ENCODE measurements at regions of chr19 and their contacts with region 1.

Region 1: DNA sequence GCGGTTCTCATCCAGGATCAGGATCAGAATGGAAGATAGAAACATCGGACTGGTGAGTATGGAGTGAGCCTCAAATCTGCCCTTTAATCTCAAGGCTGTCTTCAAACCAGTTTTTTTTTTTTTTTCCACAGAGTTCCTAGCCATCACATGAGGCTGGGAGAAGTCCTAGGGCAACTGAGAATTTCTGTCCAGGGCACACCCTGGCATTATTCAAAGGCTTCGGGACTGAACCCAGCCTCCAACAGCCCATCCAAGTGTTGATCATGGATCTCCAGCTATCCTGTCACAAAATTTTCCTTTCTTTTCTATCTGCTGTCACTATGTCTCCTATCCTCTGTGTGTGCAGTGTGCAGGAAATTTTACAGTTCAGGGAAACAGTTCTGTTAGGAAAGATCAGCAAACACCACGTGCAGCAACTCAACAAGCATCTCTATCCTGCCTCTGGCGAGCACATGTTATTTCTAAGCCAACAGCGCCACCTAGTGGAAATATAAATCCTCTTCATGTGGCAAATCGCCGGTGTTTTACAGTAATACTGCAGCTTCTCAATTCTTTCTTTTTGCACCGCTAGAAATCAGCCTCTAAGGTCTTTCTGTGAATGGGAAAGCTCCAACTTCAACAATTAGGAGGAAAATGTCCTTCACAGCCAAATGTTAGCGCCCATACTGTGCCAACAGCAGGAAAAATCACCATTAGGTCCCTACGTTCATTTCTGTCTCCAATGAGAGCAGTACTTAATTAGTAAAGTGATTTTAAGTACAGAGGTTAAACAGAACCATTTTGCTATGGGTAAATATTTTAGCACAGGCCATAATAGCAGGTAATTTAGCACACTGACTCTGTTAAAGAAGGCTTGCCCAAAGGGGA is 21.4 kb upstream of the ZNF181 start:
- DNase-seq: peak; percentile 69
- H3K4me3 ChIP-seq: no peak overlapping the region
- H3K27ac ChIP-seq: no peak overlapping the region
- H3K4me1 ChIP-seq: no peaks in the 10 kb centered on the region
- H3K27me3 ChIP-seq: no peaks in the 10 kb centered on the region
- CTCF ChIP-seq: peak; percentile 79

Region 2: GRCh38 chr19:34639491-34640085 is 73.0 kb before region 1 on chr19:
- intact Hi-C with region 1: loop called (anchors 2 kb)
- DNase-seq: peak; percentile 71
- H3K4me3 ChIP-seq: no peak overlapping the region
- H3K27ac ChIP-seq: no peak overlapping the region
- H3K4me1 ChIP-seq: no peaks in the 10 kb centered on the region
- H3K27me3 ChIP-seq: no peaks in the 10 kb centered on the region
- CTCF ChIP-seq: peak; percentile 70